H1 (cell line): ENCODE measurements at regions of chr2 and their contacts with region 1.

Region 1: DNA sequence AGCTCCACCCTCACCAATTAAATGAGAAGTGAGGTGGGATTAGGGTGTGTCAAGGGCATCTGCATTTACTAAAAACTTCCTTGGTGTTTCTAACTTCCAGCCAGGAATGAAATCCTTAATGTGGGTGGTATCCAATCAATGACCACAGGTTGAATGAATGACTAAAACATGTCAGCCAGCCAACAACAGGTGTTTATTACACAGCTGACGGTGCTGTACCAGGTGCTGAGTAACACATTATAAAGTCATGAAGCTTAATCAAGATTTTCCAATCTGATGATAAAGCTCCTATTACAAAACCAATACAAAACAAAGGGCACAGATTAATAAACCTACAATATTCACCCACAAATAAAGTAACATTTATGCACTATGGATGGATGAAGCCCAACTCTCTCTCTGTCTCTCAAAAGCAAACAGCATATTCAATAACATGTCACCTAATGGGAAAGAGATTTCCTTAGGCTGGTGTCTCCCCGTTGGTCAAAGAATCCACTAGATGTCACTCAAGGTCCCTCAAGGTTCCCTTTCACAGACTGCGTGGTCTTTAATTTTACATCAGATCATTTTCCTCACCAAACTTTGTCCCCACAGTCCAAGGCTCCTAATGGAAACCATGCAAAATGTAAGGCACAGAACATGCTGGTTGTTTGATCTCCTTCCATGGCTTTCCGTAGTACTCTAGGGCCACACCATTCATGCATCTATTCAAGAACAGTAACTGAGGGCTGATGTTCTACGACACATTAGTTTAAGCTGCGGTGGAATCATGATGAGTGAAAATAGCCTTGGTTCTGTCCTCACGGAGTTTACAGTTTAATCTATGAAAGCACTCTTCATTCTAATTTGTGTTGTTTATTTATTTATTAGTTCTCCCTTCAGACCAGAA is 6.4 kb upstream of the PTPN4 start:
- DNase-seq: peak in 1 of 2 experiments; percentile 47
- H3K4me3 ChIP-seq: no peak overlapping the region
- H3K27ac ChIP-seq: no peak overlapping the region
- H3K4me1 ChIP-seq: peaks cover 0 to 3% (median under 1%) of the 10 kb centered on the region in 4 experiments; a peak in 3 of 7 replicates
- H3K27me3 ChIP-seq: no peaks in the 10 kb centered on the region
- CTCF ChIP-seq: peak; percentile 25 to 76 (median 71)
- EP300 ChIP-seq: no peak
- POLR2A ChIP-seq: no peak
- RAD21 ChIP-seq: peak; percentile 88 to 90

Region 2: GRCh38 chr2:119730671-119731193 is 22.6 kb before region 1 on chr2:
- CTCF ChIA-PET with region 1: interaction called, 11 read pairs
- POLR2A ChIA-PET with region 1: no interaction called
- DNase-seq: no peak
- H3K4me3 ChIP-seq: no peak overlapping the region
- H3K27ac ChIP-seq: no peak overlapping the region
- H3K4me1 ChIP-seq: peaks cover 0 to 10% (median 4%) of the 10 kb centered on the region in 4 experiments; a peak in 6 of 7 replicates
- H3K27me3 ChIP-seq: no peaks in the 10 kb centered on the region; a peak in 1 of 7 replicates
- CTCF ChIP-seq: no peak
- EP300 ChIP-seq: no peak
- POLR2A ChIP-seq: no peak
- RAD21 ChIP-seq: no peak

Region 3: GRCh38 chr2:119782308-119783027 is 29.2 kb after region 1 on chr2:
- CTCF ChIA-PET with region 1: interaction called, 10 read pairs
- POLR2A ChIA-PET with region 1: no interaction called
- DNase-seq: no peak
- H3K4me3 ChIP-seq: no peak overlapping the region
- H3K27ac ChIP-seq: no peak overlapping the region
- H3K4me1 ChIP-seq: peaks cover 0 to 16% (median 7%) of the 10 kb centered on the region in 4 experiments; a peak in 4 of 7 replicates
- H3K27me3 ChIP-seq: no peaks in the 10 kb centered on the region
- CTCF ChIP-seq: no peak
- EP300 ChIP-seq: no peak
- POLR2A ChIP-seq: no peak
- RAD21 ChIP-seq: no peak

Region 4: DNA sequence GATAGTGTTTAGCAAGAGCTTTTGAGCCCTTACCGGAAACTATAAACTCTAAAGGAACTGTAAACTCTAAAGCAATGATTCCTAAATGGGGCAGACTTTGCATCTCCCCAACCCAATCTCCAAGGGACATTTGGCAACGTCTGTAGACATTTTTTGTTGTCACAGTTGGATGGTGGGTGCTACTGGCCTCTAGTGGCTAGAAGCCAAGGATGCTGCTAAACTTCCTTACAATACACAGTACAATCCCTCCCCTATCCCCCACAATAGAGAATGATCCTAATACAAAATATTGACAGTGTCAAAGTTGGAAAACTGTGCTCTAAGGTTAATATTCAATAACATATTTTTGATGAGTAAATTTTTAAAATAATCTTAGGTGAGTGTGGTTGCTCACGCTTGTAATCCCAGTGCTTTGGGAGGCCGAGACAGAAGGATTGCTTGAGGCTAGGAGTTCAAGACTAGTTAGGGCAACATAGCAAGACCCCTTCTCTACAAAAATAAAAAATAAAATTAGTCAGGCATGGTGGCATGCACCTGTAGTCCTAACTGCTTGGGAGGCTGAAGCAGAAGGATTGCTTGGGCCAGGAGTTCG is 73.2 kb after region 1 on chr2:
- CTCF ChIA-PET with region 1: interaction called, 14 read pairs
- POLR2A ChIA-PET with region 1: no interaction called
- DNase-seq: no peak
- H3K4me3 ChIP-seq: no peak overlapping the region
- H3K27ac ChIP-seq: no peak overlapping the region
- H3K4me1 ChIP-seq: peaks cover 0 to 4% (median 0%) of the 10 kb centered on the region in 4 experiments; a peak in 1 of 7 replicates
- H3K27me3 ChIP-seq: no peaks in the 10 kb centered on the region
- CTCF ChIP-seq: peak; percentile 23 to 85 (median 62)
- EP300 ChIP-seq: no peak
- POLR2A ChIP-seq: no peak
- RAD21 ChIP-seq: peak; percentile 77 to 82

Region 5: DNA sequence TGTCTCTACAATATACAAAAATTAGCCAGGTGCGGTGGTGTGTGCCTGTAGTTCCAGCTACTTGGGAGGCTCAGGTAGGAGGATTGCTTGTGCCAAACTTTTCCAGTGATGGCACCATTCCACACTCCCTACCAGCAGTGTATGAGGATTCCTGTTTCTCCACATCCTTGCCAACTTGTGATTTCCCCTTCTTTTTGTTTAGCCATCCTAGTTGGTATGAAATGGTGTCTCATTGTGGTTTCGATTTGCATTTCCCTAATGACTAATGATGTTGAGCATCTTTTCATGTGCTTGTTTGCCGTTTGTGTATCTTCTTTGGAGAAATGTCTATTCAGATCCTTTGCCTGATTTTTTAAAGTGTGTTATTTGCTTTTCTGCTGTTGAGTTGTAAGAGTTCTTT is 300.6 kb after region 1 on chr2:
- CTCF ChIA-PET with region 1: no interaction called
- POLR2A ChIA-PET with region 1: no interaction called
- DNase-seq: no peak
- H3K4me3 ChIP-seq: no peak overlapping the region
- H3K27ac ChIP-seq: no peak overlapping the region
- H3K4me1 ChIP-seq: no peaks in the 10 kb centered on the region
- H3K27me3 ChIP-seq: no peaks in the 10 kb centered on the region
- CTCF ChIP-seq: no peak
- EP300 ChIP-seq: no peak
- POLR2A ChIP-seq: no peak
- RAD21 ChIP-seq: no peak